Activated CD8-positive, alpha-beta T cell treated with anti-CD3 and anti-CD28 coated beads, Interleukin-2, amount 10 ng/mL, durations not matched to agents 7 days and 5 days (primary cell): ENCODE measurements at regions of chr14 and their contacts with region 1.

Region 1: GRCh38 chr14:60331201-60332045 is 82.4 kb downstream of the PPM1A start:
- DNase-seq: peak; percentile 89
- ATAC-seq: peak; percentile 86
- H3K4me3 Mint-ChIP-seq: peak overlapping the region; percentile 85
- H3K27ac Mint-ChIP-seq: peak overlapping the region; percentile 96
- H3K4me1 Mint-ChIP-seq: peaks cover 39% of the 10 kb centered on the region
- H3K27me3 Mint-ChIP-seq: peaks cover 29% of the 10 kb centered on the region

Region 2: DNA sequence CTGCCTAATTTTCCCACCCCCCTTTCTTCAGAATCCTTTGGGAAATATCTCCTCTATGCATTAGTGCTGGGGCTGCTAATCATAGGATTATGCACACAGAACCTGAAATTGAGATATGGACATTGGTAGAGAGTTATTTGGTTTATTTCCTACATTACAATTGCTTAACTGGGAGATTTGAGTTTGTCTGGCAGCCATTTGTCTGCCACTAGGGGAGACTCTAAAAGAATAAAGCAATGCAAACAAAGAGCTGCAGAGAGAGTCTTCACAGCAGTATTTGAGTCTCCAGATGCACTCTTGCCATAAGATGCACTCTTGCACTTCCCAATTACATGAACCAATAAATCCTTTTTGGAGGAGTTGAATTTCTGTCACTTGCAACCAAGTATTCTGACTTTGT is 251.7 kb before region 1 on chr14:
- CTCF ChIA-PET with region 1: no interaction called
- POLR2A ChIA-PET with region 1: no interaction called
- DNase-seq: no peak
- ATAC-seq: no peak
- H3K4me3 Mint-ChIP-seq: no peak overlapping the region
- H3K27ac Mint-ChIP-seq: no peak overlapping the region
- H3K4me1 Mint-ChIP-seq: no peaks in the 10 kb centered on the region
- H3K27me3 Mint-ChIP-seq: peaks cover 5% of the 10 kb centered on the region

Region 3: GRCh38 chr14:60184146-60184904 is 147.1 kb before region 1 on chr14:
- CTCF ChIA-PET with region 1: interaction called, 24 read pairs
- POLR2A ChIA-PET with region 1: no interaction called
- DNase-seq: peak; percentile 63
- ATAC-seq: peak; percentile 79
- H3K4me3 Mint-ChIP-seq: peak overlapping the region; percentile 69
- H3K27ac Mint-ChIP-seq: peak overlapping the region; percentile 70
- H3K4me1 Mint-ChIP-seq: peaks cover 13% of the 10 kb centered on the region
- H3K27me3 Mint-ChIP-seq: peaks cover 2% of the 10 kb centered on the region

Region 4: GRCh38 chr14:60254176-60254575 is 77.2 kb before region 1 on chr14:
- CTCF ChIA-PET with region 1: interaction called, 31 read pairs
- POLR2A ChIA-PET with region 1: interaction called, 6 read pairs
- DNase-seq: no peak
- ATAC-seq: no peak
- H3K4me3 Mint-ChIP-seq: no peak overlapping the region
- H3K27ac Mint-ChIP-seq: no peak overlapping the region
- H3K4me1 Mint-ChIP-seq: peaks cover 32% of the 10 kb centered on the region
- H3K27me3 Mint-ChIP-seq: no peaks in the 10 kb centered on the region

Region 5: DNA sequence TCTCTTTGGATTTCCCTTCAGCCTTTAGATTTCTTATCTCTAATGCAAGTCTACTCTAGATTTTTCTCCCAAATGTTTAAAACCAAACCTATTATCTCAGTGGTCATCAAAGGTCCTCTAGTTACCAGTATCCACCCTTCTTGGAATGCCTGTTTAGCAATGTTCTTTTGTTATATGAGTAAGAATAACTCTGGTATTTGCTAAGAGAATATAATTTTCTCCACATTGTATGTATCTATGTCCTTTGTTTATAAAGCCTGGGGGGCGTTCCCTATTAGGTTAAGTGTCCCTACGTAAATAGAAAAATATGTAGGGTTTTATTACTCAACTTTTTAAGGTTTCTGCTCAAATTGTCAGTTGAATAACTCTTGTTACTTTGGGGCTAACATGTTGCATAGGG is 55.1 kb before region 1 on chr14:
- CTCF ChIA-PET with region 1: interaction called, 16 read pairs
- POLR2A ChIA-PET with region 1: no interaction called
- DNase-seq: no peak
- ATAC-seq: no peak
- H3K4me3 Mint-ChIP-seq: no peak overlapping the region
- H3K27ac Mint-ChIP-seq: no peak overlapping the region
- H3K4me1 Mint-ChIP-seq: peaks cover 19% of the 10 kb centered on the region
- H3K27me3 Mint-ChIP-seq: no peaks in the 10 kb centered on the region

Region 6: DNA sequence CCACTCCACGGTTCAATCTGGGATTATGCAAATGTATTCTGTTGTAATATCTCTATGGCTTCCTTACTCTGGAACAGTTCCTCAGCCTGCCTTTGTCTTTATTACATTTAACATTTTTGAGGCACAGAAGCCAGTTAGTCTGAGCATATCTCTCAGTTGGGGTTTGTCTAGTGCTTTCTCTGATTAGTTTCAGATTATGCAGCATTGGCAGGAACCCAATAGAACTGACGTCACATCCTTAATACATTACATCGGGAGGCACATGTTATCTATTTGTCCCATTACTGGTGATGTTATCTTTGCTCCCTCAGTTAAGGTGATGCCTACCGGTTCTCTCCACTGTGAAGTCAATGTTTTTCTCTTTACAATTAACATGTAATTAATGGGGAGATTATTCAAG is 20.0 kb before region 1 on chr14:
- CTCF ChIA-PET with region 1: interaction called, 14 read pairs
- POLR2A ChIA-PET with region 1: no interaction called
- DNase-seq: no peak
- ATAC-seq: no peak
- H3K4me3 Mint-ChIP-seq: no peak overlapping the region
- H3K27ac Mint-ChIP-seq: no peak overlapping the region
- H3K4me1 Mint-ChIP-seq: no peaks in the 10 kb centered on the region
- H3K27me3 Mint-ChIP-seq: peaks cover 13% of the 10 kb centered on the region

Region 7: GRCh38 chr14:60349663-60350365 is 18.4 kb after region 1 on chr14:
- CTCF ChIA-PET with region 1: interaction called, 31 read pairs
- POLR2A ChIA-PET with region 1: interaction called, 3 read pairs
- DNase-seq: peak; percentile 39
- ATAC-seq: peak; percentile 39
- H3K4me3 Mint-ChIP-seq: no peak overlapping the region
- H3K27ac Mint-ChIP-seq: no peak overlapping the region
- H3K4me1 Mint-ChIP-seq: no peaks in the 10 kb centered on the region
- H3K27me3 Mint-ChIP-seq: peaks cover 5% of the 10 kb centered on the region